Activated B cell treated with CpG ODN at 0.5 μM for 24 hours (primary cell): ENCODE measurements at regions of chr18 and their contacts with region 1.

Region 1: DNA sequence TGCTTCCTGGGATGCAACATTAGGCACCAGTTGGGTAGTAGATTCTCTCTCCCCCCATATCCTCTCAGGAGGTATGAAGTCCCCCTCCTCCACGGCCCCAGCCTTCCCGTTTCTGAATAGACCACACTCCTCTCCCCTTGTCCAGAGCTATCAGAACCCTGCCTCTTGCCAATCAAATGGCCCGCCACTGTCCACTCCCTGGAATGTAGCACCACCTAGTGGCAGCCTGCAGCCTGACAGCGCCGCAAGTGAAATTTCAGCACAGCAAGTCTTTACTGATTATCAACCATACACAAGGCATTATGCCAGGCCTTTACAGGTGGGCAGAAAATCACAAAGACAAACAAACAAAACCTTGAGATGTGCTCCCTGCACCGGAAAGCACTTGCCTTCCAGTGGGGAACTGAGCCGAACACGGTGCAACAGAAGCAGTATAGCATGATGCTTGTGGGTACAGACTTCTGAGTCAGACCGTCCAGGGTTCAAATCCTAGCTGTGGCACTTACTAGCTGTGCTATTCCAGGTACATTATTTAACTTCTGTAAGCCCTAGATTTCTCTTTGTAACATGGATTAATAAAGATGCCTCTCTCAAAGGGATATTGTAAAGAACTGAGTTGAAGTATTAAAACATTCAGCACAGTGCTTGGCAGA is 174.0 kb downstream of the SMAD2 start:
- DNase-seq: peak; percentile 37
- ATAC-seq: peak; percentile 56
- H3K4me3 Mint-ChIP-seq: no peak overlapping the region
- H3K27ac Mint-ChIP-seq: no peak overlapping the region
- H3K4me1 Mint-ChIP-seq: no peaks in the 10 kb centered on the region
- H3K27me3 Mint-ChIP-seq: peaks cover 22% of the 10 kb centered on the region
- CTCF ChIP-seq: peak; percentile 23

Region 2: DNA sequence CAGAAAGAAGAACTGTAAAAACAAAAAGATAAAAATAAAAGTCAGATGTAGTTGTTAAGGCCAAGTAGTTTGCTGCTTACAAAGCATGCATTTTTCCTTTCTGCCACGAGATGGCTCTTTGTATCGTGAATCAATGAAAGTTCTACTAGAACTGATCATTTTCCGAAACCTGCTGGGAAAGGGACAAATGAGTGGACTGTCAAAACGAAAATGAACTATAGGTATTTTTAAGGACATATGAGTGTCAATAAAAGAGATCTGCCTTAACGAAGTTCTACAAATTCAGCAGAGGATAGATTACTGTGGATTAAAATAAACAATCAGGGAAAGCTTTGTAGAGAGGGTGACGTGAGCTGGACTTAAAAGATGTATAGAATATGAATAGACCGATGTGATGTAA is 706.0 kb before region 1 on chr18:
- CTCF ChIA-PET with region 1: interaction called, 6 read pairs
- POLR2A ChIA-PET with region 1: no interaction called
- intact Hi-C with region 1: loop called (anchors 1 kb)
- DNase-seq: no peak
- ATAC-seq: peak; percentile 28
- H3K4me3 Mint-ChIP-seq: no peak overlapping the region
- H3K27ac Mint-ChIP-seq: no peak overlapping the region
- H3K4me1 Mint-ChIP-seq: no peaks in the 10 kb centered on the region
- H3K27me3 Mint-ChIP-seq: peaks cover 3% of the 10 kb centered on the region
- CTCF ChIP-seq: no peak

Region 3: DNA sequence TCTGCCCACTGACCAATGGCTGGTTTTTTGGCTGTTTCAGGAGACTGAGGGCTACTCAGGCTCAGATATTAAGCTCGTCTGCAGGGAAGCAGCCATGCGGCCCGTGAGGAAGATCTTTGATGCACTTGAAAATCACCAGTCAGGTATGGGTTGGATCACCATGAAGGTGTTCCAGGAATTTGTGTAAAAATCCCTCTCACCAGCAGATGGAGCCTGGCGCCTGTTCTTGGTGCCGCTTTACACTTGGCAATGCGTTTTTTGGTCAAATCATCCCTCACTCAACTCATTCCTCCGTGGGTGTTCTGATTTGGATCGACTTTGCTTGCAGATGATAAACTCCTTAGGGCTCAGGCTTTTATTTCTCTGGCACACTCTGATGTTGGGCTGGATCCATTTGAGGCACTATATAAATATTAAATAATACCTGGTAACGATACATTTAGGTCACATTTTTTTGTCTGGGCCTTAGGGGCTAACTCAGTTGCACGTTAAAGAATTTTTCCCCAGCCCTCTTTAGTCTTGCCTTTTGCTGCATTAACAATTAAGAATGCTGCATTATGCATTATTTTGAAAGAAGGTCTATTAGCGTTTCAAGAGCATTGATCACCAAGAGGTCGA is 656.2 kb before region 1 on chr18:
- CTCF ChIA-PET with region 1: interaction called, 4 read pairs
- POLR2A ChIA-PET with region 1: no interaction called
- intact Hi-C with region 1: loop called (anchors 1 kb)
- DNase-seq: peak; percentile 24
- ATAC-seq: peak; percentile 42
- H3K4me3 Mint-ChIP-seq: no peak overlapping the region
- H3K27ac Mint-ChIP-seq: no peak overlapping the region
- H3K4me1 Mint-ChIP-seq: no peaks in the 10 kb centered on the region
- H3K27me3 Mint-ChIP-seq: no peaks in the 10 kb centered on the region
- CTCF ChIP-seq: peak; percentile 85

Region 4: GRCh38 chr18:47215554-47216138 is 540.8 kb before region 1 on chr18:
- CTCF ChIA-PET with region 1: interaction called, 9 read pairs
- POLR2A ChIA-PET with region 1: no interaction called
- intact Hi-C with region 1: loop called (anchors 1 kb)
- DNase-seq: no peak
- ATAC-seq: peak; percentile 31
- H3K4me3 Mint-ChIP-seq: no peak overlapping the region
- H3K27ac Mint-ChIP-seq: no peak overlapping the region
- H3K4me1 Mint-ChIP-seq: no peaks in the 10 kb centered on the region
- H3K27me3 Mint-ChIP-seq: peaks cover 36% of the 10 kb centered on the region
- CTCF ChIP-seq: no peak